ENCODE measurements at regions of chr11 and their contacts with region 1.

Region 1: DNA sequence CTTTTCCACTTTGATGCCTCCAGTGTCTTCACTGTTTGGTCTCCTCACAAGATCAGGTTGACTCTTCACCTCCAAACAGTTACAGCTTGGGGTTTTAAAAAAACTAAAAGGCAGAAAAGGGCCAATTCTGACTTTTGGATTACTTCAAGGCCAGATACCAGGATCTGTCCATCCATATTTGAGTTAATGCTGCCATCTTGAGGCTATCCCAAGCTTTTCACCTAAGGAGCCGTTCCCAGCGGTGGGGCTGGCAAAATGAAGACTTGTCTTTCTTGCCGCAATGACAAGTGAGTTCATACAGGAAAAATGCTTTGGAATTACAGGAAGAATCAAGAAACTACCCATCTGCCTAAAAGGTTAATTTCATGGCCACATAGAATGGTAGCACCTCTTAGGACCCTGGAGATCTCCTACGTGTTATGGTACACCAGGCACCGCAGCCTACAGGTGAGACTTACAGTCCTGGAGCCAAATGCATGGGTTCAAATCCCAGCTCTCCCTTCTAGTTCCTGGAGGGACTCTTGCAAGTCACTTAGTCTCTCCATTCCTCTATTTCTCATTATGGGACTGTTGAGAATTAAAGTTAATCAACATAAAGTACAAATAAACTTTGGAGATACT is 6.0 kb upstream of the OR5B21 start:
- DNase-seq: peak; percentile 79
- H3K4me3 ChIP-seq: no peak overlapping the region
- H3K27ac ChIP-seq: no peak overlapping the region
- H3K4me1 ChIP-seq: peaks cover 23% of the 10 kb centered on the region
- H3K27me3 ChIP-seq: no peaks in the 10 kb centered on the region

Region 2: GRCh38 chr11:57741132-57742086 is 772.4 kb before region 1 on chr11 and contains the start of gene SELENOH:
- in situ Hi-C with region 1: loop called (anchors 10 kb)
- DNase-seq: peak; percentile 98
- H3K4me3 ChIP-seq: peak within 1 kb of the TSS; percentile 87
- H3K27ac ChIP-seq: peak within 1 kb of the TSS; percentile 80
- H3K4me1 ChIP-seq: peaks cover 11% of the 10 kb centered on the region
- H3K27me3 ChIP-seq: no peaks in the 10 kb centered on the region
- total RNA-seq, gene SELENOH: 96.6 and 123 TPM in 2 replicates

Region 3: DNA sequence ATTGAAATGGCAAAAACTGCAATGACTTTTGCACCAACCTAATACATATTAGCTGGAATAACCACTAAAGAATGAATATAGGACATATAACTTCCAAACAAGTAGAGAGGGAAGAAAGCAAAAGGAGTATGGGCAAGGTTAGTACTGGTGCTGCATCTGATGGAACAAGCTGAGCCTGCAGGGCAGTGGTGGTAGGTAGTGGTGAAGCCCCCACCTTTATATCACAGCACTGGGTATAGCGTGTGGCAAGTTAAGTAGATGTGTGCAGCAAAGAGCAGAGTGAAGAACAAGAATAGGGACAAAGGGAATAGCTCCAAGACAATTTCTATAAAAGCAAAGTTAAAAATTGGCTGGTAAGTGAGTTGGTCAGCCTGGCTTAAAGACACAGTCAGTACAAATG is 690.0 kb before region 1 on chr11:
- in situ Hi-C with region 1: loop called (anchors 10 kb)
- DNase-seq: no peak
- H3K4me3 ChIP-seq: no peak overlapping the region
- H3K27ac ChIP-seq: no peak overlapping the region
- H3K4me1 ChIP-seq: no peaks in the 10 kb centered on the region
- H3K27me3 ChIP-seq: no peaks in the 10 kb centered on the region

Measured in GM23248 (cell line).